Posterior vena cava (tissue), 2 donors: ENCODE measurements at regions of chr4 and their contacts with region 1.

Region 1: DNA sequence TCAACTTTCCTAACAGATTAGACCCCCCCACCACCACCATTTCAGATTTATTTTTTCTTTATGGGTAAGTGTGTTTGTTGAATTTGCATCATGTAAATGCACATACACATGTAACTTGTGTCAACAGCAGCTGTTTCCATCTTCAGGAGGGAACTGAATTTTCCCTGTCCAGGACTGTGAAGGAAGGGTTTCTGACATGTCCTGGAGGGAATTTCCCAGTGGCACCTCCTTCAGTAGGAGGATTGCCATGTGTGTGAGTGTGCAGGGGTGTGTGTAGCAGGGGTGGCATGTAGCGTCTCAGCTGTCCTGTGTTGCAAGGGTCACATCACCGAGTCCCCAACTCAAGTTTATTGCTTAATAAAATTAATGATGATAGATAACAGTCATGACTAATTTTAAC is 19.7 kb downstream of the HERC6 start:
- DNase-seq: no peak

Region 2: DNA sequence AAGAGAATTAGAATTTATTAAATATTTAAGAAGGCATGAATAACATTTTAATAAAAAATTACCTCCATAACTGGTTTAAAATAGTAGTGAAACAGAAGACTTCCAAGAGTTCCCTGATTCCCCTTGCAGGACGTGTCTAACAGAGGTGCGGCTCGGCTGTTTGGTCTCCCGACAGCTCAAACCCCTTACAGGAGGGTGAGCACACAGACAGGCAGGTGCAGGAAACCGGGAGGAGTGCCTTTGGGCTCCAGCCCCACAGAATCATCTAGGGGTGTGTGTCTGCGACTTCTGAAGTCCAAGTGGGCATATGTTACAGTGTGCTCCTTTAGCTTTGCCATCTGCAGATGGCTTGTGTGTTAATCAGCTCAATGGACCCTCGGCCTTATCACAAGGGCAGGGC is 1640.7 kb after region 1 on chr4:
- intact Hi-C with region 1: loop called in 1 of 2 experiments (anchors 10 kb)
- DNase-seq: no peak